IMR-90 (cell line): ENCODE measurements at regions of chr15 and their contacts with region 1.

Region 1: GRCh38 chr15:37995461-37996347 is 61.3 kb downstream of the TMCO5A start:
- DNase-seq: peak; percentile 75
- ATAC-seq: peak; percentile 87
- H3K4me3 ChIP-seq: no peak overlapping the region
- H3K27ac ChIP-seq: no peak overlapping the region
- H3K4me1 ChIP-seq: peaks cover 3% of the 10 kb centered on the region
- H3K27me3 ChIP-seq: peaks cover 18% of the 10 kb centered on the region
- CTCF ChIP-seq: peak; percentile 74
- POLR2A ChIP-seq: no peak; the same call in 1 of the 2 replicates
- RAD21 ChIP-seq: peak; percentile 85

Region 2: GRCh38 chr15:38414357-38414756 is 418.7 kb after region 1 on chr15:
- CTCF ChIA-PET with region 1: interaction called, 3 read pairs
- POLR2A ChIA-PET with region 1: no interaction called
- dilution Hi-C with region 1: no loop called
- in situ Hi-C with region 1: loop called (anchors 10 kb)
- intact Hi-C with region 1: loop called (anchors 1 kb)
- DNase-seq: peak; percentile 75
- ATAC-seq: peak; percentile 100
- H3K4me3 ChIP-seq: no peak overlapping the region
- H3K27ac ChIP-seq: no peak overlapping the region
- H3K4me1 ChIP-seq: no peaks in the 10 kb centered on the region
- H3K27me3 ChIP-seq: peaks cover 32% of the 10 kb centered on the region
- CTCF ChIP-seq: peak; percentile 86
- POLR2A ChIP-seq: 0 out of 2 replicates have a peak, but pooled peaks have one; percentile 41
- RAD21 ChIP-seq: peak; percentile 95

Region 3: DNA sequence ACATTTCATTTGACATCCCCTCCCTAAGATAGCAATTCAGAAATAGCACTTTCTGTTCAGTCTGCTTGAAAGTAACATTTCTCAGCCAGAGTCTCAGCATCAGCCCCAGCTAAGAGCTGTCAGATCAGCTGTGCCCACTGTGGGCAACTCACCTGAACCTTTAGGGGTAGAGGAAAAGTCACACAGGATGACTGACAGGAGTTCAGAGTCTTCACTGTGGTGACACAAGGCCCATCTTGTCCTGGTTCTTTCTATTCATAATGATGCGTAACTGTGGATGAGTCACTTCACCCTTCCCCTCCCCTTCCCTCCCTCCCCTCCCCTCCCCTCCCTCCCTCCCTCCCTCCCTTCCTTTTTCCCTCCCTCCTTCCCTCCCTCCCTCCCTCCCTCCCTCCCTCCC is 665.0 kb after region 1 on chr15:
- CTCF ChIA-PET with region 1: no interaction called
- POLR2A ChIA-PET with region 1: no interaction called
- dilution Hi-C with region 1: no loop called
- in situ Hi-C with region 1: loop called (anchors 10 kb)
- intact Hi-C with region 1: no loop called
- DNase-seq: no peak
- ATAC-seq: no peak
- H3K4me3 ChIP-seq: no peak overlapping the region
- H3K27ac ChIP-seq: no peak overlapping the region
- H3K4me1 ChIP-seq: no peaks in the 10 kb centered on the region
- H3K27me3 ChIP-seq: peaks cover 42% of the 10 kb centered on the region
- CTCF ChIP-seq: no peak
- POLR2A ChIP-seq: no peak
- RAD21 ChIP-seq: no peak

Region 4: DNA sequence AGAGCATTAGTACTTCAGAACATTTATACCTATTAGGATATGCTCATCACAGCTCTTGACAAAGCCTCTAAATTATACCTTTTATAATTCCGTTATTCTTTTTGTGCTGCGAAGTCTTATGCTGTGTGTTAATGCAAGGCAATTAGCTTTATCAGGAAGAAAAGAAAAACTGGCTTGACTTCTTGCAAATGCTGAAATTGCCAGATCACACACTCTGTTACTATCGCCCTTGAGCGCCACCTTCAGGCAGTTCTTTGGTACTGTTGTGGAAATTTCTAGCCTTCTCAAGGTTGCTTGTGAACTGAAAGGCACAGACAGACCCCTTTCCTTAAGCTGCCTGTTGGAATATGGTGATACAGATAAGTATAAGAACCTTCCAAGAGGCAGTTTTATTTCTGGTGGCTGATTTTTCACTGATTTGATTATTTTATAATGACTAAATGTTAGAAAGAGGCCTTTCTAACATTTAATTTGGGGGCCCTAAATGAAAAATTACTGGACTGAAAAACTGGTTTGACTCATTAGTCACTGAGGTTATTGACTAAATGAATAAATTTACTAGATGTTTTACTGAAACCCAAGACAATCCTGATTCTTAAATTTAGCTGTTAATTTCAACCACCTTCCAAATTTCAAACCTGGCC is 695.1 kb after region 1 on chr15:
- CTCF ChIA-PET with region 1: interaction called, 3 read pairs
- POLR2A ChIA-PET with region 1: no interaction called
- dilution Hi-C with region 1: no loop called
- in situ Hi-C with region 1: loop called (anchors 10 kb)
- intact Hi-C with region 1: loop called (anchors 5 kb)
- DNase-seq: peak; percentile 75
- ATAC-seq: peak; percentile 64
- H3K4me3 ChIP-seq: no peak overlapping the region
- H3K27ac ChIP-seq: no peak overlapping the region
- H3K4me1 ChIP-seq: no peaks in the 10 kb centered on the region
- H3K27me3 ChIP-seq: peaks cover 2% of the 10 kb centered on the region; the same call in 1 of the 2 replicates
- CTCF ChIP-seq: peak; percentile 74
- POLR2A ChIP-seq: no peak
- RAD21 ChIP-seq: peak; percentile 63

Region 5: DNA sequence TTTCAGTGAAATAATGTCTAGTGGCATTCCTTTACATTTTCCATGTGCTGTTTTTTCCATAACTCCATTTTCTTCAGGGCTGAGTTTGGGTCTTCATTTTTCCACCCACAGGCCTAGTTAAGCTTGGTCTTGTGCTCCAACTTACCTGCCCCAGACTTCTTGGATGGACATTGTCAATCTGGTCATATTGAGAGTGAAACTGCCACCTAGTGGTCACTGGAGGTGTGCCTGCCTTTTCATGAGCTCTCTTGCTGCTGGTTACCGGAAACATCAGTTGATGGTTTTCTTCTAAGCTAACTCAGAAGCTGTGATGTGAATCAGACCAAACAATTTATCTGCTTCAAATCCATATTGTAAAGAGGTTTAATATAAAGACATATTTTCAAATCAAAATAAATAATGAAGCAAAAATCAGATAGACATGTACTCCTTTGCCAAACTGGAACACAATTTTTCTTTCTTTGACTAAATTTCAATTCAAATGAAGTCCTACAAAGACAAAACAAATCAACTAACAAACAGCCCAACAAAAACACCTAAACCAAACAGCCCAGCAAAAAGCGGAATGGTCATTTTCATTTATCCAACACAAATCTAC is 704.0 kb after region 1 on chr15:
- CTCF ChIA-PET with region 1: interaction called, 3 read pairs
- POLR2A ChIA-PET with region 1: no interaction called
- dilution Hi-C with region 1: no loop called
- in situ Hi-C with region 1: loop called (anchors 10 kb)
- intact Hi-C with region 1: loop called (anchors 5 kb)
- DNase-seq: peak; percentile 65
- ATAC-seq: peak; percentile 38; the same call in 1 of the 2 replicates
- H3K4me3 ChIP-seq: no peak overlapping the region
- H3K27ac ChIP-seq: no peak overlapping the region
- H3K4me1 ChIP-seq: peaks cover 14% of the 10 kb centered on the region; the same call in 1 of the 2 replicates
- H3K27me3 ChIP-seq: no peaks in the 10 kb centered on the region
- CTCF ChIP-seq: peak; percentile 66
- POLR2A ChIP-seq: no peak
- RAD21 ChIP-seq: peak; percentile 52